Activated CD4-positive, alpha-beta T cell treated with anti-CD3 and anti-CD28 coated beads, Interleukin-2, amount 10 ng/mL, durations not matched to agents 7 days and 5 days (primary cell): ENCODE measurements at regions of chr7 and their contacts with region 1.

Region 1: DNA sequence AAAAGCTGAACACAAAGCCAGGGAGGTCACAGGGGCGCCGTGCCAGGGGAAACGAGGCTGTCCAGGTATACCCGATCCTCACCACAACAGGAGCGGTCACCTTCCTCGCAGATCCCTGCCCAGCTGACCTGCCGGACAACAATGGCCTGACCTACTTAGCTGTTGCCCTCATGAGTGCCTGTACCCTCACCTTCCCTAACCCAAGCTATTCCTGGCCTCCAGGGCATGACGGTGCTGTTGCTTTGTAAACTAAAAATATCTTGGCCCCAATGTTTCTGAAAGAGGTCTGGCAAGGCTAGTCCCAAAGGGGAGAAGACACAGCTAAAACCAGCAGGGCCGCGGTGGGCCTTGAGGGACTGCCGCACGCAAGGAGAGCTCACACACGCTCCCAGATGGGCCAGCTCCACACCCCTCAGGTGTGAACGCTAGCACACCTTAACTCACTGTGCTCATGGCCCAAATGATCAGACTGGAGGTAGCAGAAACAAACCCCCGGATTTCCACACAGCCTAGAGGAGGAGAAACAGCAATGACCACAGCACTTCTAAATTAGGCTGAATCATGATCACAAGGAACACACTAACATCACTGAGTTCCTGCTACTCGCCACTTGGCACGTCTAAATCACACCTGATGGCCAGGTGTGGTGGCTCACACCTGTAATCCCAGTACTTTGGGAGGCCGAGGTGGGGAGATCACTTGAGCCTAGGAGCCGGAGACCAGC is 66.3 kb upstream of the CYTH3 start:
- DNase-seq: no peak
- H3K4me3 Mint-ChIP-seq: no peak overlapping the region
- H3K27ac Mint-ChIP-seq: no peak overlapping the region
- H3K4me1 Mint-ChIP-seq: peaks cover 15% of the 10 kb centered on the region
- H3K27me3 Mint-ChIP-seq: no peaks in the 10 kb centered on the region

Region 2: GRCh38 chr7:6139189-6139996 is 199.3 kb before region 1 on chr7:
- CTCF ChIA-PET with region 1: no interaction called
- POLR2A ChIA-PET with region 1: no interaction called
- DNase-seq: no peak
- H3K4me3 Mint-ChIP-seq: no peak overlapping the region
- H3K27ac Mint-ChIP-seq: no peak overlapping the region
- H3K4me1 Mint-ChIP-seq: peaks cover 15% of the 10 kb centered on the region
- H3K27me3 Mint-ChIP-seq: no peaks in the 10 kb centered on the region

Region 3: GRCh38 chr7:6350433-6351058 is 11.8 kb after region 1 on chr7:
- CTCF ChIA-PET with region 1: no interaction called
- POLR2A ChIA-PET with region 1: no interaction called
- DNase-seq: no peak
- H3K4me3 Mint-ChIP-seq: no peak overlapping the region
- H3K27ac Mint-ChIP-seq: no peak overlapping the region
- H3K4me1 Mint-ChIP-seq: peaks cover 13% of the 10 kb centered on the region
- H3K27me3 Mint-ChIP-seq: peaks cover 7% of the 10 kb centered on the region

Region 4: GRCh38 chr7:6365451-6365850 is 26.7 kb after region 1 on chr7:
- CTCF ChIA-PET with region 1: no interaction called
- POLR2A ChIA-PET with region 1: interaction called, 11 read pairs
- DNase-seq: no peak
- H3K4me3 Mint-ChIP-seq: no peak overlapping the region
- H3K27ac Mint-ChIP-seq: no peak overlapping the region
- H3K4me1 Mint-ChIP-seq: peaks cover 12% of the 10 kb centered on the region
- H3K27me3 Mint-ChIP-seq: no peaks in the 10 kb centered on the region

Region 5: GRCh38 chr7:6700793-6701192 is 362.1 kb after region 1 on chr7:
- CTCF ChIA-PET with region 1: no interaction called
- POLR2A ChIA-PET with region 1: no interaction called
- DNase-seq: no peak
- H3K4me3 Mint-ChIP-seq: no peak overlapping the region
- H3K27ac Mint-ChIP-seq: no peak overlapping the region
- H3K4me1 Mint-ChIP-seq: peaks cover 33% of the 10 kb centered on the region
- H3K27me3 Mint-ChIP-seq: no peaks in the 10 kb centered on the region